Endothelial cell of umbilical vein (primary cell): ENCODE measurements at regions of chr1 and their contacts with region 1.

Region 1: GRCh38 chr1:212284744-212285684 is at the start of gene PPP2R5A:
- DNase-seq: peak; percentile 100
- H3K4me3 ChIP-seq: peak within 1 kb of the TSS; percentile 63 to 86 (median 85)
- H3K27ac ChIP-seq: peak within 1 kb of the TSS; percentile 44
- H3K4me1 ChIP-seq: peaks cover 19% of the 10 kb centered on the region
- H3K27me3 ChIP-seq: no peaks in the 10 kb centered on the region
- CTCF ChIP-seq: peak in 1 of 2 donors; percentile 15
- POLR2A ChIP-seq: peak; percentile 53
- total RNA-seq, gene PPP2R5A: 27.7 and 34.5 TPM in 2 replicates

Region 2: GRCh38 chr1:212012034-212012740 is 272.8 kb before region 1 on chr1:
- CTCF ChIA-PET with region 1: no interaction called
- POLR2A ChIA-PET with region 1: no interaction called
- dilution Hi-C with region 1: no loop called
- intact Hi-C with region 1: loop called (anchors 1 kb)
- DNase-seq: peak; percentile 70
- H3K4me3 ChIP-seq: no peak overlapping the region
- H3K27ac ChIP-seq: no peak overlapping the region
- H3K4me1 ChIP-seq: peaks cover 4% of the 10 kb centered on the region
- H3K27me3 ChIP-seq: no peaks in the 10 kb centered on the region
- CTCF ChIP-seq: peak; percentile 90 to 92
- POLR2A ChIP-seq: no peak

Region 3: GRCh38 chr1:212242288-212242984 is 42.6 kb before region 1 on chr1:
- CTCF ChIA-PET with region 1: interaction called, 4 read pairs
- POLR2A ChIA-PET with region 1: no interaction called
- dilution Hi-C with region 1: no loop called
- intact Hi-C with region 1: loop called (anchors 1 kb)
- DNase-seq: peak; percentile 59
- H3K4me3 ChIP-seq: peak overlapping the region in 1 of 3 experiments; percentile 26
- H3K27ac ChIP-seq: peak overlapping the region; percentile 56
- H3K4me1 ChIP-seq: peaks cover 23% of the 10 kb centered on the region
- H3K27me3 ChIP-seq: no peaks in the 10 kb centered on the region
- CTCF ChIP-seq: no peak
- POLR2A ChIP-seq: no peak

Region 4: GRCh38 chr1:212368073-212368484 is 83.1 kb after region 1 on chr1:
- CTCF ChIA-PET with region 1: interaction called, 6 read pairs
- POLR2A ChIA-PET with region 1: interaction called, 3 read pairs
- dilution Hi-C with region 1: no loop called
- intact Hi-C with region 1: loop called (anchors 2 kb)
- DNase-seq: peak; percentile 68
- H3K4me3 ChIP-seq: no peak overlapping the region
- H3K27ac ChIP-seq: no peak overlapping the region
- H3K4me1 ChIP-seq: no peaks in the 10 kb centered on the region
- H3K27me3 ChIP-seq: no peaks in the 10 kb centered on the region
- CTCF ChIP-seq: peak; percentile 77 to 78
- POLR2A ChIP-seq: no peak